Endothelial cell of umbilical vein (primary cell): ENCODE measurements at regions of chr21 and their contacts with region 1.

Region 1: DNA sequence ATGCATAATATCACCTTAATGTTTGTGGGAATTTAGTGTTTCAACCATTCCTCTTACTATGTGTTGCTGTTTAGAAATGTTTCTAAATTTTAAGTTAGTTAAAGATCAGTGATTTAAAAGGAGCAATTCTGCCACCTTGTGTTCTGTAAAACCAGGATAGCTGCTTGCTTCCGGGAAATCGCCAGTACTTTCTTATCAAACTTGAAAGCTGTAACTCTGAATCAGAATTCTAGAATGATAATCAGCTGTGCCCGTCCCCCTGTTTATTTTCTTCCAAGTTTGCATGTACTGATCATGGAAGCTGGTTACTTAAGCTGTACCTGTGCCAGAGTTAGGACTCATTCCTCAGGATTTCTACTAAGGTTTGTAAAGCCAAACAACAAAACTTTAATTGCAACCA is 656.4 kb downstream of the LTN1 start:
- DNase-seq: peak; percentile 78
- H3K4me3 ChIP-seq: no peak overlapping the region
- H3K27ac ChIP-seq: no peak overlapping the region
- H3K4me1 ChIP-seq: peaks cover 20% of the 10 kb centered on the region
- H3K27me3 ChIP-seq: no peaks in the 10 kb centered on the region
- CTCF ChIP-seq: peak; percentile 16 to 25
- POLR2A ChIP-seq: no peak

Region 2: DNA sequence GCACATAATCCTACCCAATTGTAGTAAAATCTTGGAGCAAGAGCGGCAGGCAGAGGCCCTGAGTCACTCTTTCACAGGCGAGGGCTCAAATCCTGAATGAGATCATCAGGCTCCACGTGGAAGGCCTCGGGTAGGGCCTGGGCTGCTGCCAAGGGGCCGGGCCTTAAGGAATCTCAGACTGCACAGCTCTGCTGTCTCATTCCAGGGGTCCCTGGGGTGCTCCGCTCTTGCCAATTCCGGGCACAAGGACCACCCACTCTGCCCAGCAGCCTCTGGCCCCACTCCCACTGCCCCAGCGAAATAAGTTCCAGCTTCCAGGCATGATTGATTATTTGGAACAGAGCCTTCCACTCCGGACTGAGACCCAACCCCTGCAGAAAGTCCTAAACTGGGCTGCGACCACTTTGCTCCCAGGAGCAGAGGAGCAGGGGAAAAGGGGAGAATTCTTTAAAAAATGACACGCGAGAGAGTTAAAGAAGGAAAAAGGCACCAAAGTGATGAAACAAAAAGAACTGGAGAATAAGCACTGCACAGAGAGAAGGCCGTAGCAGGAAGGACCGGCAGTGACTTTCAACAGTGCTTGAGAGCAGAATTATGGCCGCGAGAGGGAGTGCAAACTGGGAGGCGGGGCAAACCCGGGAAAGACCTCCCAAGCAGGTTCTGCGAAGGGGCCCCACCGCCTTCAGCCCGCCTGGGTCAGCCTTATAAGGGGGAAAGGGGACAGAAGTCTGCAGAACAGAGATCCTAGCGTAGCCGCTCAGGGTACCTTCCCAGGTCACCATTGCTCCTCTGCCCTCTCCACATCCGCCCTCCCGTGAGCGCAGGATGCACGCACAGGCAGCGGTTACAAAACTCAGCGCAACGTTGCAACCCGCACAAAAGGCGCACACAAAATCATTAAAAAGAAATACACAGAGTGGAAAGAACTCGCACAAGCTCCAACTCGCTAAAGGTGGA is 1493.1 kb before region 1 on chr21:
- CTCF ChIA-PET with region 1: interaction called, 5 read pairs
- POLR2A ChIA-PET with region 1: no interaction called
- dilution Hi-C with region 1: no loop called
- intact Hi-C with region 1: loop called (anchors 1 kb)
- DNase-seq: peak; percentile 94
- H3K4me3 ChIP-seq: peak overlapping the region; percentile 38 to 77 (median 64)
- H3K27ac ChIP-seq: peak overlapping the region; percentile 80
- H3K4me1 ChIP-seq: peaks cover 35% of the 10 kb centered on the region
- H3K27me3 ChIP-seq: peaks cover 5 to 16% of the 10 kb centered on the region in 2 experiments
- CTCF ChIP-seq: peak; percentile 12 to 34
- POLR2A ChIP-seq: no peak

Region 3: DNA sequence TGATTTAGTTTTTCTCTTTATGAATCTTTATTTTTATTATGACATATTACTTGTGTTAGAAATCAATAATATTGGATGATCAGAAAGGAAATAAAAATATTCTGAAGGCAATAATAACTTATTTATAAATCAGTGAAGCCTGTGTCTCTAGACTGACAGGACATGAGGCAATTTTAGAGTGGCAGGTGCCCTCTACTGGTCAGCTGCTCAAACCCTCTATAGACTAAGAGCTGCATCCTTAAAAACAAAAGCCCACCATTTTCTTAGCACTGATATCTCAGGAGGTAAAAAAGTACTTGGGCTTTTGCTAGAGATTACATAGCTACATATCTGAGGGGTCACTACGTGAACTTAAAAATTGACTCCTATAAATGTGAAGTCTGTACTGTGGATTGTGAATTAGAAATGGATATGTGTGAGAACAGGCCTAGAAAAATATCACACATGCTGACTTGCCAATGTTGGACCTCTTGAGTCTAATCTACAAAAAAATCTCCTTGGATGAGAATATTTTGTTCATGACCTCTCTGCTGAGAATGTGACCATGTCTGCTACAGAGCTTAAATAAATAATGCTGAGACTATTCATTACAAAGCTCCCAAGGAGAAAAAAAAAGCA is 771.5 kb before region 1 on chr21:
- CTCF ChIA-PET with region 1: interaction called, 9 read pairs
- POLR2A ChIA-PET with region 1: no interaction called
- dilution Hi-C with region 1: no loop called
- intact Hi-C with region 1: loop called (anchors 5 kb)
- DNase-seq: peak; percentile 68
- H3K4me3 ChIP-seq: no peak overlapping the region
- H3K27ac ChIP-seq: no peak overlapping the region
- H3K4me1 ChIP-seq: no peaks in the 10 kb centered on the region
- H3K27me3 ChIP-seq: no peaks in the 10 kb centered on the region
- CTCF ChIP-seq: peak; percentile 61 to 68
- POLR2A ChIP-seq: no peak

Region 4: DNA sequence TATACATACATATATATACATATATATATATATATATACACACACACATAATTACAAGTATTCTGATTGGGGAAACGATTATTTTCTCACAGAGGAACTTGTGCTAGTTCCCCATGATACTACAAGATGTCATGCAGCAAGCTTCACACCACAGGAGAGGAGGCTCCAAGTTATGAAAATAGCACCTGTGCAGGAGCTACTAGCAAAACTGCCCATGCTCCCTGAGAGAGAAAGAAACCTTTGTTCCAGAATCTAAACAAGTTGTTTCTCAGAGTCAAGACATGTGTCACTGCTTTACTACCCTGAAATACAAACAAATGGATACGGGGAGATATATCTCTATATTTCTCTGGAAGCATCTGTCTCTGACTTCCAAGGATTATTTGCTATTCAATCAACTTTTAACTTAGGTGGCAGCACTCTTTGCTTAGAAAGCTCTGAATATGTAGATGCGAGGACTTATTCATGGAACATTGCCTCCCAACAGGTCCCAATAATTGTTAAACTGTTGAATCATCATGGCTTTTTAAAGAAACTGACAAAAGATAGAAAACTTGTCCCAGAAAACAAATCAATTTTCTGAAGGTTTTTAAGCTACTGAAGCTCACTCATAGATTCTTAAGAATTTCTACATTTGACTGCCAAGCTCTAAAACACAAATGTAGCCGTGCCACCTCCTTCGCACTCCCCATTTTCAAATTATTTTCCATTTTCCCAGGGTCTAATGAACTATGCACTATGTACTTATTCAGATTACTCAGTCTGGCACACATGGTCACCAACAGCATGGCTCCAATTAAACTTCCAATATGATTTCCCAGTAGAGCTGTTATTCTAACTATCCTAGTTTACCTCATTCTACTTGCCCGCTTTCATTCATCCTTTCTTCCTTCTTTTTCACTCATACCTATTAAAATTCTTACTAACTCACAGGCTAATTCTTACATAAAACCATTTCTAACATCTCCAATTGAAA is 272.8 kb before region 1 on chr21:
- CTCF ChIA-PET with region 1: interaction called, 12 read pairs
- POLR2A ChIA-PET with region 1: no interaction called
- dilution Hi-C with region 1: no loop called
- intact Hi-C with region 1: no loop called
- DNase-seq: no peak
- H3K4me3 ChIP-seq: no peak overlapping the region
- H3K27ac ChIP-seq: no peak overlapping the region
- H3K4me1 ChIP-seq: no peaks in the 10 kb centered on the region
- H3K27me3 ChIP-seq: no peaks in the 10 kb centered on the region
- CTCF ChIP-seq: no peak
- POLR2A ChIP-seq: no peak

Region 5: DNA sequence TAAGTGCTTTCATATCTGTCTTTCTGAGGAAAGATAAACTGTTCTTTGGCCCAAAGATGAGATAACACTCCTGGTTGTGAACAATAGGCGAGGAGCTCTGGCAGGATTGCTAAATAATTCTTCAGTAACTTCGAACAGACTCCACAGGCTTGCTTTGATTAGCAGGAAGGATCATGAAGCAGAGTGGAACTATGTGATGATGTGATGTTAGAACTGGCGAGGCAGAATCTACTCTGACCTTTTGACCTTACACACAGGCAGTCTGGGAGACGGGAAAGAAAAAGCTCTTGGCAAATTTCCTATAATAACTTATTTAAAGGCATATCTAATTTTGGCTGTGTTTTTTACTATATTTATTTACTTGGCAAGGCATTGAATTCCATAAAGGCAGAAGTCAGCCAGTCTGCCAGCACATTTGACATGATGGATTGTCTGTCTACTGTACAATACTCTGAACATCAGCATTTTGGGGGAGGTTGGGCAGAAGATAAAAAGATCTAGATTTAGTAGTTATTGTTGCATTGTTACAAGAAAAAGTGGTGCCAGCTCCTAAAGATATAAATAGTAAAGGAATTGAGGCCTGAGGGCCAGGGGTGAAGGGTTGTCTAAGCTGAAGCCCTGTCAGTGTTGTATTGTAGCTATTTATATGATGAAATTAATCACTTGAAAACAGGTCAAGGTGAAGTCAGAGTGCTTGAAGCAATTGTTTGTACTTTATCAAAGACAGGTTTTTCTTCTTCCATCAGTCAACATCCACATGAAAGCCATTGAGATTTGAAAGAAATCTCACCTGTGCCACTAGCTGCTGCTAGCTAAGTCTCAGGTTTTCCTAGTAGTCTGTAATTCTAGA is 52.4 kb before region 1 on chr21:
- CTCF ChIA-PET with region 1: interaction called, 23 read pairs
- POLR2A ChIA-PET with region 1: no interaction called
- dilution Hi-C with region 1: no loop called
- intact Hi-C with region 1: loop called (anchors 1 kb)
- DNase-seq: peak; percentile 97
- H3K4me3 ChIP-seq: peak overlapping the region in 1 of 3 experiments; percentile 17
- H3K27ac ChIP-seq: peak overlapping the region; percentile 79
- H3K4me1 ChIP-seq: peaks cover 21% of the 10 kb centered on the region
- H3K27me3 ChIP-seq: no peaks in the 10 kb centered on the region
- CTCF ChIP-seq: no peak
- POLR2A ChIP-seq: no peak

Region 6: GRCh38 chr21:28633839-28634555 is 297.7 kb after region 1 on chr21:
- CTCF ChIA-PET with region 1: interaction called, 3 read pairs
- POLR2A ChIA-PET with region 1: no interaction called
- dilution Hi-C with region 1: no loop called
- intact Hi-C with region 1: loop called (anchors 2 kb)
- DNase-seq: peak; percentile 94
- H3K4me3 ChIP-seq: peak overlapping the region in 1 of 3 experiments; percentile 1
- H3K27ac ChIP-seq: peak overlapping the region; percentile 97
- H3K4me1 ChIP-seq: peaks cover 59% of the 10 kb centered on the region
- H3K27me3 ChIP-seq: no peaks in the 10 kb centered on the region
- CTCF ChIP-seq: no peak
- POLR2A ChIP-seq: peak; percentile 12